CD4-positive, alpha-beta memory T cell (primary cell): ENCODE measurements at regions of chr1 and their contacts with region 1.

Region 1: DNA sequence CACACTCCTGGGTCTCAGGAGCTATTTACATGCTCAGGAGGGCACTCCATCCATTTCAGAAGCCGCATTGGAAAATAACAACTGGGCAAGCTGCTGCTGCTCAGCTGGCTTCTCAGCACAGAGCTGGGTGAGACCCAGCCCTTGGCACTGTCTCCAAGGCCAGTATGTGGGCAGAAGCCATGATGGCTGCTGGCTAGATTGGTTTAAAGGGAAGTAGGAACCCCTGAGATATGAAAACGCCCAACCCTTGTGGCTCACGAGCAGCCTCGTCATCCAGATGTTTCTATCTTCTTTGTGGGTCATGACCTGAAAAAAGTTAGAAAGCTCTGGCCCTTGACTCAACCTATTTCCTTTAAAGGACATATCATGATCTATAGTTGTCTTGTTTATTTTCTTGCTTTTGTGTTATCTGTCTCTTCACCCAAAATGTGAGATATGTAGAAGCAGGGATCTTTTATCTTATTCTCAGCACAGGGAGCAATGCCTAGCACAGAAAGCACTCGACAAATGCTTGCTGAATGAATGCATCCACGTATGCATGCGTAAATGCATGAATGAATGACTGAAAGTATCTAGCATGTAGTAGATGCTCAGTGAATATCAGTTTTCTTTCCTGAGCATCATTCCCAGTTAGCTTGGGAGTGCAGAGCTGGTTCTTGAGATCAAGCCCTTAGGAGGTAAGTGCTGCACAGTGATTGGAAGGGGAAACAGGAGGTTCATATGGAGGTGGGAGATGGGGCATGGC is 11.6 kb downstream of the MYBPH start:
- DNase-seq: no peak
- H3K4me3 ChIP-seq: no peak overlapping the region
- H3K4me3 Mint-ChIP-seq: no peak overlapping the region
- H3K27ac ChIP-seq: no peak overlapping the region
- H3K27ac Mint-ChIP-seq: no peak overlapping the region
- H3K4me1 ChIP-seq: no peaks in the 10 kb centered on the region
- H3K4me1 Mint-ChIP-seq: no peaks in the 10 kb centered on the region
- H3K27me3 ChIP-seq: no peaks in the 10 kb centered on the region
- H3K27me3 Mint-ChIP-seq: peaks cover 14 to 20% of the 10 kb centered on the region in 2 donors

Region 2: GRCh38 chr1:203181586-203182386 is 17.7 kb after region 1 on chr1:
- CTCF ChIA-PET with region 1: no interaction called
- POLR2A ChIA-PET with region 1: no interaction called
- intact Hi-C with region 1: loop called (anchors 2 kb)
- DNase-seq: no peak
- H3K4me3 ChIP-seq: no peak overlapping the region
- H3K4me3 Mint-ChIP-seq: no peak overlapping the region
- H3K27ac ChIP-seq: no peak overlapping the region
- H3K27ac Mint-ChIP-seq: no peak overlapping the region
- H3K4me1 ChIP-seq: no peaks in the 10 kb centered on the region
- H3K4me1 Mint-ChIP-seq: no peaks in the 10 kb centered on the region
- H3K27me3 ChIP-seq: no peaks in the 10 kb centered on the region
- H3K27me3 Mint-ChIP-seq: peaks cover 2 to 6% of the 10 kb centered on the region in 2 donors

Region 3: GRCh38 chr1:203744075-203744972 is 580.3 kb after region 1 on chr1:
- CTCF ChIA-PET with region 1: no interaction called
- POLR2A ChIA-PET with region 1: no interaction called
- intact Hi-C with region 1: no loop called
- DNase-seq: peak; percentile 39 to 75 (median 58)
- H3K4me3 ChIP-seq: peak overlapping the region in 1 of 2 donors; percentile 41
- H3K4me3 Mint-ChIP-seq: peak overlapping the region; percentile 61 to 86 (median 74)
- H3K27ac ChIP-seq: peak overlapping the region; percentile 50
- H3K27ac Mint-ChIP-seq: peak overlapping the region; percentile 89 to 97 (median 95)
- H3K4me1 ChIP-seq: peaks cover 15% of the 10 kb centered on the region
- H3K4me1 Mint-ChIP-seq: peaks cover 24 to 32% (median 28%) of the 10 kb centered on the region in 4 donors
- H3K27me3 ChIP-seq: no peaks in the 10 kb centered on the region
- H3K27me3 Mint-ChIP-seq: no peaks in the 10 kb centered on the region